OCI-LY7 (cell line): ENCODE measurements at regions of chr4 and their contacts with region 1.

Region 1: GRCh38 chr4:113781439-113782040 is 20.0 kb upstream of the CAMK2D start:
- DNase-seq: peak; percentile 71
- H3K4me3 ChIP-seq: no peak overlapping the region
- H3K27ac ChIP-seq: no peak overlapping the region
- H3K4me1 ChIP-seq: peaks cover 5% of the 10 kb centered on the region
- CTCF ChIP-seq: peak; percentile 95

Region 2: GRCh38 chr4:113893546-113893945 is 112.0 kb after region 1 on chr4:
- CTCF ChIA-PET with region 1: no interaction called
- POLR2A ChIA-PET with region 1: interaction called, 10 read pairs
- intact Hi-C with region 1: no loop called
- DNase-seq: peak; percentile 12
- H3K4me3 ChIP-seq: no peak overlapping the region
- H3K27ac ChIP-seq: no peak overlapping the region
- H3K4me1 ChIP-seq: peaks cover 2% of the 10 kb centered on the region
- CTCF ChIP-seq: peak; percentile 75

Region 3: GRCh38 chr4:113901994-113902787 is 120.7 kb after region 1 on chr4:
- CTCF ChIA-PET with region 1: no interaction called
- POLR2A ChIA-PET with region 1: no interaction called
- intact Hi-C with region 1: loop called (anchors 5 kb)
- DNase-seq: no peak
- H3K4me3 ChIP-seq: no peak overlapping the region
- H3K27ac ChIP-seq: no peak overlapping the region
- H3K4me1 ChIP-seq: peaks cover 23% of the 10 kb centered on the region
- CTCF ChIP-seq: no peak

Region 4: DNA sequence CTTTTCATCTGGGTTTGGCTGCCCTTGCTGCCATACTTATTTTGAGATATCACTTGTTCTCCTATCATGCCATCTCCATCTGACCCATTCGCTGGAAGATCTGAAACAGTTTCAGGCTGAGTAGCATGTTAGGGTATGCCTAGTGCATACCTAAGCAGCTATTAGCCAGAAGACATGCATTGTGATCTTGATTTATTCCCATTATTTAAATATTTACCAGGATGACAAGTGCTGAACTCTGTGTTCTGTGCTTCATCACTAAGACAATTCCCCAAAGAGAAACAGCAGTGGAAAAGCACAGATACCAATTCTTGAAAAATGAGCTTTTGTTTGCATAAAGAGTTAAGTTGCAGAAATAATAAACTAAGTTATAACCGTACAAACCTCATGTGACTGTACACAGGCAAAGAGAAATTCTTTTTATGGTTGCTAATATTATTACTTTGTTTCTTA is 468.9 kb after region 1 on chr4:
- CTCF ChIA-PET with region 1: no interaction called
- POLR2A ChIA-PET with region 1: no interaction called
- intact Hi-C with region 1: no loop called
- DNase-seq: no peak
- H3K4me3 ChIP-seq: no peak overlapping the region
- H3K27ac ChIP-seq: no peak overlapping the region
- H3K4me1 ChIP-seq: no peaks in the 10 kb centered on the region
- CTCF ChIP-seq: no peak